Mammary epithelial cell (primary cell): ENCODE measurements at regions of chr12 and their contacts with region 1.

Region 1: GRCh38 chr12:79487386-79488110 is 203.2 kb downstream of the PAWR start:
- DNase-seq: no peak
- H3K4me3 ChIP-seq: no peak overlapping the region
- H3K27ac ChIP-seq: no peak overlapping the region
- H3K4me1 ChIP-seq: peaks cover 5% of the 10 kb centered on the region
- H3K27me3 ChIP-seq: no peaks in the 10 kb centered on the region
- CTCF ChIP-seq: no peak

Region 2: GRCh38 chr12:79451978-79452377 is 35.6 kb before region 1 on chr12:
- CTCF ChIA-PET with region 1: no interaction called
- dilution Hi-C with region 1: no loop called
- in situ Hi-C with region 1: loop called in 1 of 2 experiments (anchors 5 kb)
- intact Hi-C with region 1: no loop called
- DNase-seq: peak; percentile 84
- H3K4me3 ChIP-seq: no peak overlapping the region
- H3K27ac ChIP-seq: no peak overlapping the region
- H3K4me1 ChIP-seq: peaks cover 15% of the 10 kb centered on the region
- H3K27me3 ChIP-seq: no peaks in the 10 kb centered on the region
- CTCF ChIP-seq: no peak